ENCODE measurements at regions of chr14 and their contacts with region 1.

Region 1: DNA sequence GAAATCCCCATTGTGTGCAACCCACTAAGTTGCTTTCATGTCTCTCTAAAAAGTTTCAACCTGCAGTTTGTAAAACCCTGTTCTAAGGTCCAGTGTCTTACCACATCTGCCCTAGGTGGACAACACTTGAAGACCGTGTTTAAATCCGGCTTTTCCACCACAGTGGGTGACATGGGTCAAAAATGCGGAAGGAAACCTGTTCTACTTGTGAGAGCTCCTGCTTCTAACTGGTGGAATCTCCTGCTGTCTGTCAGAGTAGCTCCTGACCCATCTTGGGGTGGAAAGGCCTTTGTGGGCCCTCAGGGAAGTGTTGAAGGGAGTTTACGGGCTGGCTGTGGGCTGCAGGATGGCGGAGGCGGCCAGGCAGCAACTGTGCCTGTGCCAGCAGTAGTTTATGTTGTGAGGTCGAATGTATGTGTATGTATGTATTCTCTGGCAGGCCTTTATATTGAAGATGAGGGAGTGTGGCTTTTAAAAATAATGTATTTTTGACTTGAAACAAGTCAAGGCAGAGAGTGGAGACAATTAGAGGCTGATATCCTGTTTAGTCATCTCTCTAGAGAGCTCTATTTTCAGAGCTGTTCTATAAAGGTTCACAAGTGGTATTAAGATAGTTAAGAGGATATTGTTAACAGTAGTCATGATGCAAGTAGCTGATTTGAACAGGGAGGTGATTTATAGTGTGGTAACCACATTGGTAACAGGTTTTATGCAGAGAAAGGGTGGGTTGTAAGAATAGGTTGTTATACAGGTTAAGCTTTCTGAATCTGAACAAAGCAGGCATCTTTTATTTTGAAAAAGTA is 67.0 kb downstream of the PRKCH start:
- DNase-seq: peak; percentile 71
- ATAC-seq: peak; percentile 81
- H3K4me3 Mint-ChIP-seq: no peak overlapping the region
- H3K27ac Mint-ChIP-seq: no peak overlapping the region
- H3K4me1 Mint-ChIP-seq: no peaks in the 10 kb centered on the region
- H3K27me3 Mint-ChIP-seq: no peaks in the 10 kb centered on the region

Region 2: GRCh38 chr14:61048640-61049039 is 339.7 kb before region 1 on chr14:
- CTCF ChIA-PET with region 1: no interaction called
- POLR2A ChIA-PET with region 1: no interaction called
- intact Hi-C with region 1: no loop called
- DNase-seq: no peak
- ATAC-seq: no peak
- H3K4me3 Mint-ChIP-seq: no peak overlapping the region
- H3K27ac Mint-ChIP-seq: no peak overlapping the region
- H3K4me1 Mint-ChIP-seq: no peaks in the 10 kb centered on the region
- H3K27me3 Mint-ChIP-seq: no peaks in the 10 kb centered on the region

Region 3: DNA sequence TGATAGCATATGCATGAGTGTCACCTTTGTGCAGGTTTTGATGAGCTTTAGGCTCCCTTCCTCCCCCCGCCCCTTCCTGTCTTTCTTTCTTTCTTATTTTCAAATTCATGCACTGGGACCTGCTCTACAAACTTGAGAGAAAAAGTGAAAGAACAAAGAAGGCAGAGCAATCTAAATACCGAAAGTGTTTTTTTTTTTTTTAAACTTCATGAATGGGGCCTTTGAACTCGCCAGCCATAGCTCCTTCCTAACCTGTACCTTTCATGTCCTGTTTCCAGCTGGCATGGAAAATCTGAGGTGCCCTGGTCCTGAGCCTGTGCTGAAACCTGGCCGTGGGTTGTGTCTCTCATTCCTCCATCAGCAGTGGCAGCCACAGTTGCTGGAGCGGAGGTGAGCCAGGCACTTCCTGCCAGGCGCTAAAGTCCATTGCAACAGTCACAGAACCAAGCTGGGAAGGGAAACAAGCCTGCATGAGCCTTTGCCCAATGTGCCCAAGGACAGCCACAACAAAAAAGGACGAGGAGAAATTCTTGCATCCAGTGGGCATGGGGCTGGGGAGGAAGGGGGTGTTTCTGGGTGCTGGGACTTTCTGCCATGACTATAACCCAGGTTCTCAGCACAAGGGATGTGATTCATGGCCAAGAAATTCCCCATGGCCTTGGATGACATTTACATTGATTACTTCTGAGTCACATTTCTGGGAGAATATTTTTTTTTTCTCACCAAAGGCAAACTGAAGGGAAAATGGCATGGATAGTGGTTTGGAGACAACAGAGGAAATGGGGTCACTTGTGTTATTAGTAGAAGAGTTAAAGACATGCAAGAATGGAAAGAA is 209.9 kb before region 1 on chr14:
- CTCF ChIA-PET with region 1: no interaction called
- POLR2A ChIA-PET with region 1: no interaction called
- intact Hi-C with region 1: loop called in 1 of 2 experiments (anchors 5 kb)
- DNase-seq: peak; percentile 85
- ATAC-seq: peak; percentile 82
- H3K4me3 Mint-ChIP-seq: peak overlapping the region; percentile 38
- H3K27ac Mint-ChIP-seq: peak overlapping the region; percentile 88
- H3K4me1 Mint-ChIP-seq: peaks cover 52% of the 10 kb centered on the region
- H3K27me3 Mint-ChIP-seq: peaks cover 4% of the 10 kb centered on the region

Region 4: DNA sequence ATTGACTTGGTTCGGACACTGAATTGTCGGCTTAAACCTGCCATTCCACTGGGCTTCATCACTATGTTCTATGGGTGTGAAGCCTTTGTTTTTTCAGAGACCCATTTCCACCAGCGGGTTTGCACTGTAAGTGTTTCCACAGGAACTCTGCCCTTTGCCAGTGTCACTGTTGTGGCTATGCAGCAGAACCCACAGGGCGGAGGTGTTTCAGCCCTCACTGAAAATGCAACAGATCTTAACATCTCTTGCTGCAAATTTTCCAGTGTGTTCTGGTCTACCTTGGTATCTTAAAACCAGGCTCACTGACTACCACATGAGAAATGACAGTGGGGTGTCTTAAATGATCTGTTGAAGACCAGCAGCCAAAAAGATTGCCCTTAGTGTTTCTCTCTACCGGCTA is 45.9 kb before region 1 on chr14:
- CTCF ChIA-PET with region 1: interaction called, 11 read pairs
- POLR2A ChIA-PET with region 1: interaction called, 10 read pairs
- intact Hi-C with region 1: loop called (anchors 2 kb)
- DNase-seq: peak; percentile 91
- ATAC-seq: peak; percentile 60
- H3K4me3 Mint-ChIP-seq: peak overlapping the region; percentile 86
- H3K27ac Mint-ChIP-seq: peak overlapping the region; percentile 99
- H3K4me1 Mint-ChIP-seq: peaks cover 94% of the 10 kb centered on the region
- H3K27me3 Mint-ChIP-seq: no peaks in the 10 kb centered on the region

Region 5: DNA sequence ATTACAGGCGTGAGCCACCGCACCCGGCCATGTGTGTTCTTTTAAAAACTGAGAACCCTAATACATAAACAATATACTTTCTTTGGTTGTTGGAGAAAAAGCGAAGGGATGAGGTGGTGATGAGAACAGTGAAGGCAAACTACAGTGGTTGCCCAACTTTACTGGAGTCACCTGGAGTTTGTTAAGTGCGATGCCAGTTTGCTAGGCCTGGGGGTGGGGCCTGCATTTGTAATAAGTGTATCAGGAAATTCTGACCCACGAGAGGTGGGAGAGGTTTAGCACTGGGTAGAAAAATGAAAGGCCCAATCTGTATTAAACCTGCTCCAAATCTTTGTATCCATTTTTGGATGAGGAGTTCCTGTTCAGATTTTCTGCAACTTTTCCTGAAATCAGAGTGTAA is 18.2 kb before region 1 on chr14:
- CTCF ChIA-PET with region 1: interaction called, 3 read pairs
- POLR2A ChIA-PET with region 1: interaction called, 9 read pairs
- intact Hi-C with region 1: loop called in 1 of 2 experiments (anchors 2 kb)
- DNase-seq: no peak
- ATAC-seq: no peak
- H3K4me3 Mint-ChIP-seq: peak overlapping the region; percentile 8
- H3K27ac Mint-ChIP-seq: peak overlapping the region; percentile 65
- H3K4me1 Mint-ChIP-seq: peaks cover 40% of the 10 kb centered on the region
- H3K27me3 Mint-ChIP-seq: no peaks in the 10 kb centered on the region

Region 6: GRCh38 chr14:61433169-61433568 is 44.8 kb after region 1 on chr14:
- CTCF ChIA-PET with region 1: no interaction called
- POLR2A ChIA-PET with region 1: no interaction called
- intact Hi-C with region 1: loop called (anchors 1 to 2 kb)
- DNase-seq: no peak
- ATAC-seq: peak; percentile 42
- H3K4me3 Mint-ChIP-seq: peak overlapping the region; percentile 42
- H3K27ac Mint-ChIP-seq: peak overlapping the region; percentile 92
- H3K4me1 Mint-ChIP-seq: peaks cover 90% of the 10 kb centered on the region
- H3K27me3 Mint-ChIP-seq: no peaks in the 10 kb centered on the region

Region 7: DNA sequence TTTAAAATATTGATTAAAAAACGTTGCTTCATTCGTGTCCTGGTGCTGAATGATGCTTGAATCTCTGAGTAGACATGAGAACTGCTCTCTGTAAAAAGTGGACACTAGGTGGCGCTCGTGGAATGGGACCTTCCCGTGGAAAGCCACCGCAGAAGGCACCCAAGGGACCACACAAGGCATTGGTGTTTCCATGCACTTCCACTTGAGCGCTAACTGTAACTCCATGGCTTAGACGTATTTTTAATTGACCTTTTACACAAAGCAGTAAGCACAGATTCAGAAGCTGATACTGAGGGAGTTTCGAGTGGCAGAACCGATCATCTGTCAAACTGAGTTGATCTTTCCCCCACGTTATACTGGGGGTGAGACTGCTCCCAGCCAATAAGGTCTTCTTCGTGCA is 68.3 kb after region 1 on chr14:
- CTCF ChIA-PET with region 1: interaction called, 4 read pairs
- POLR2A ChIA-PET with region 1: interaction called, 3 read pairs
- intact Hi-C with region 1: loop called in 1 of 2 experiments (anchors 5 kb)
- DNase-seq: peak; percentile 91
- ATAC-seq: peak; percentile 36
- H3K4me3 Mint-ChIP-seq: no peak overlapping the region
- H3K27ac Mint-ChIP-seq: peak overlapping the region; percentile 81
- H3K4me1 Mint-ChIP-seq: peaks cover 85% of the 10 kb centered on the region
- H3K27me3 Mint-ChIP-seq: no peaks in the 10 kb centered on the region

Measured in activated CD4-positive, alpha-beta T cell treated with anti-CD3 and anti-CD28 coated beads for 36 hours (primary cell).